K562 (cell line): ENCODE measurements at regions of chr3 and their contacts with region 1.

Region 1: GRCh38 chr3:38985581-38985980 is 66.2 kb downstream of the SCN11A start:
- DNase-seq: no peak
- ATAC-seq: no peak
- H3K4me3 ChIP-seq: no peak overlapping the region
- H3K27ac ChIP-seq: no peak overlapping the region
- H3K4me1 ChIP-seq: peaks cover 0 to 6% of the 10 kb centered on the region in 2 experiments; a peak in 2 of 5 replicates
- H3K27me3 ChIP-seq: peaks cover 20 to 38% of the 10 kb centered on the region in 2 experiments; a peak in 4 of 5 replicates
- CTCF ChIP-seq: no peak
- EP300 ChIP-seq: no peak
- POLR2A ChIP-seq: no peak
- RAD21 ChIP-seq: no peak

Region 2: GRCh38 chr3:38878646-38879045 is 106.9 kb before region 1 on chr3:
- CTCF ChIA-PET with region 1: no interaction called
- POLR2A ChIA-PET with region 1: no interaction called
- in situ Hi-C with region 1: no loop called
- intact Hi-C with region 1: no loop called
- DNase-seq: no peak
- ATAC-seq: no peak
- H3K4me3 ChIP-seq: no peak overlapping the region
- H3K27ac ChIP-seq: no peak overlapping the region
- H3K4me1 ChIP-seq: no peaks in the 10 kb centered on the region
- H3K27me3 ChIP-seq: no peaks in the 10 kb centered on the region
- CTCF ChIP-seq: no peak
- EP300 ChIP-seq: no peak
- POLR2A ChIP-seq: no peak
- RAD21 ChIP-seq: no peak

Region 3: DNA sequence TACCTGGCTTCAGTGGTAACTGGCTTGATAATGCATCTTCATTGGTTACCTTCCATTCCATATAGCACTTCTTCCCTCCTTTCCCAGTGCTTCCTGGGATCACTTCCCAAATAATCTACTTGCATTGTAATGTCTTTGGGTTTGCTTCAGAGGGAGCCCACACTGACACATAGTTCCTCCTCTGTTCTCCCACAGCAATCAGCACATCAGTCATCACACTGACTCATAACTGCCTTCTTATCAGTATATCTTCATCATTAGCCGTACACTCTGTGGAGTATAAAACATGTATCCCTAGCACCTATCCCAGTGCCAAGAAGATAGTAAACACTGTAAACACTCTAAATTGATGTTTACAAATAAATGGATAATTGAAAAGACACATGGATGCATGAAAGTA is 78.2 kb before region 1 on chr3:
- CTCF ChIA-PET with region 1: no interaction called
- POLR2A ChIA-PET with region 1: no interaction called
- in situ Hi-C with region 1: no loop called
- intact Hi-C with region 1: loop called (anchors 10 kb)
- DNase-seq: no peak
- ATAC-seq: no peak
- H3K4me3 ChIP-seq: no peak overlapping the region
- H3K27ac ChIP-seq: no peak overlapping the region
- H3K4me1 ChIP-seq: no peaks in the 10 kb centered on the region
- H3K27me3 ChIP-seq: peaks cover 0 to 7% of the 10 kb centered on the region in 2 experiments; a peak in 2 of 5 replicates
- CTCF ChIP-seq: no peak
- EP300 ChIP-seq: no peak
- POLR2A ChIP-seq: no peak
- RAD21 ChIP-seq: no peak